AG04450 (cell line): ENCODE measurements at regions of chr10 and their contacts with region 1.

Region 1: GRCh38 chr10:87973635-87974034 is 110.2 kb downstream of the PTEN start:
- DNase-seq: no peak
- H3K4me3 ChIP-seq: no peak overlapping the region
- H3K27ac ChIP-seq: no peak overlapping the region
- H3K27me3 ChIP-seq: no peaks in the 10 kb centered on the region
- CTCF ChIP-seq: no peak

Region 2: DNA sequence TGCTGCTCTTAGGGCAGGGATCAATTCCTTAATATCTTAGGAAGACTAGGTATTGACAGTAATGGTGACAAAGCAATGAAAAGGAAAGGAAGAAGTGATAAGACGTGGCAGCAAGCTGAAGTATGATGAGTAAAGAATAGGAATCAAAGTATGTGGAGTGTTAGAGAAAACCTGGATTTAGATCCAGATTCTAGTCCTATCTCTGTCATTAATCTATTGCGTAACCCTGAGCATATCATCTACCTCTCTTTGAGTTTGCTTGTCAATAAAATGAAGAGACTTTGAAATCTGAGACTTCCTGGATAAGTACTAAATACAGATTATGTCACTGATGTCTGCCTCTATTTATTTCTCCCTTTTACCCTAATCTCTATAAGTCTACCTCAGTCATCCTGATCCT is 21.0 kb before region 1 on chr10:
- CTCF ChIA-PET with region 1: no interaction called
- POLR2A ChIA-PET with region 1: no interaction called
- DNase-seq: no peak
- H3K4me3 ChIP-seq: no peak overlapping the region
- H3K27ac ChIP-seq: no peak overlapping the region
- H3K27me3 ChIP-seq: no peaks in the 10 kb centered on the region
- CTCF ChIP-seq: no peak

Region 3: DNA sequence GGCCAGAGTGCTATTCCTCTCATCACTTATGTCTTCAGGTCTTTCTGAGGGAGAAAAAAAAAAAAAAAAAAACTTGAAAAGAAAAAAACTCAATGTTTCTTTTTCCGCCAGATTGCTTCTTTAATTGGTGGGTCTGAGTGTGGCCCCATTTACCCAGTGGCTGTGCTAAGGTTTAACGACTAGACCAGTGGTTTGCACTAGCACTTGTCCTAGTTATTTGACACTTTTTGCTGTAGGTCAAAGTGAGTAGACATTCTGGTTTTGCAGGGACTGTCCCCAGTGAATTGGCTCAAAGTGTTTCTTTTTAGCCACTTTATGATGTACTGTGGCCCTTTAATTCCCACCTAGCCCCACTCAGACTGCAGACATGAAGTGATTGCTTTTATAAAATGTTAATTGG is 163.1 kb after region 1 on chr10:
- CTCF ChIA-PET with region 1: no interaction called
- POLR2A ChIA-PET with region 1: interaction called, 10 read pairs
- DNase-seq: no peak
- H3K4me3 ChIP-seq: no peak overlapping the region
- H3K27ac ChIP-seq: no peak overlapping the region
- H3K27me3 ChIP-seq: no peaks in the 10 kb centered on the region
- CTCF ChIP-seq: no peak